Activated CD4-positive, alpha-beta T cell treated with anti-CD3 and anti-CD28 coated beads, Interleukin-2, amount 10 ng/mL, durations not matched to agents 7 days and 5 days (primary cell): ENCODE measurements at regions of chr1 and their contacts with region 1.

Region 1: GRCh38 chr1:59947047-59947938 is 20.7 kb upstream of the CYP2J2 start:
- DNase-seq: peak; percentile 63
- H3K4me3 Mint-ChIP-seq: no peak overlapping the region
- H3K27ac Mint-ChIP-seq: no peak overlapping the region
- H3K4me1 Mint-ChIP-seq: no peaks in the 10 kb centered on the region
- H3K27me3 Mint-ChIP-seq: peaks cover 17% of the 10 kb centered on the region

Region 2: DNA sequence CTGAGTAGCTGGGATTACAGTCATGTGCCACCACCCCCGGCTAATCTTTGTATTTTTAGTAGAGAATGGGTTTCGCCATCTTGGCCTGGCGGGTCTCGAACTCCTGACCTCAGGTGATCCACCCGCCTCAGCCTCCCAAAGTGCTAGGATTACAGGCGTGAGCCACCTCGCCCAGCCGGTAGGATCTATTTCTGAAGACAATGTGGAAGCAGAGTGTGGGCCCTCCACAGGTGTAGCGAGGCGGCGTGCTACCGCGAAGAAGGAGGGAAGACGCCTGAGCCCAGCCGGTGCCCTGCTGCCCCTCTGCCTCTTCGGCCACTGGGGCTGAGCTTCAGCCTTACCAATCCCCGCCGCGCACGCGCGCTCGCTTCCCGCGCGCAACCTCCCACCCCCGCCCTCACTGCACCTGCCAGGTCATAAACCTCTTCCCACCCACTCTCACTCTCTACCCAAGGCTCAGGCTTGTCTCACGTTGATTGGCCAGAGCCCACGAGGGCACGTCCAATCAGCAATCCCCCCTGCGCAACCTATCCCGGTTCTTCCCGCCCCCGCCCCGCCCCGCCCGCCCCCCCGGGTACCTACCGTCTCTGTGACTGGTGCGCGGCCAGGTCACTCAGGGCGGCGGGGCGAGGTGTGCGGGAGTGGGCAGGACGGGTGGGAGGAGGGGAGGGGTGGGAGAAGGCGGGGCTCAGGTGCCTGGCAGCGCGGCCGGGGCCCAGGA is 133.0 kb before region 1 on chr1:
- CTCF ChIA-PET with region 1: no interaction called
- POLR2A ChIA-PET with region 1: no interaction called
- DNase-seq: peak; percentile 90
- H3K4me3 Mint-ChIP-seq: no peak overlapping the region
- H3K27ac Mint-ChIP-seq: peak overlapping the region; percentile 85
- H3K4me1 Mint-ChIP-seq: peaks cover 9% of the 10 kb centered on the region
- H3K27me3 Mint-ChIP-seq: peaks cover 22% of the 10 kb centered on the region

Region 3: DNA sequence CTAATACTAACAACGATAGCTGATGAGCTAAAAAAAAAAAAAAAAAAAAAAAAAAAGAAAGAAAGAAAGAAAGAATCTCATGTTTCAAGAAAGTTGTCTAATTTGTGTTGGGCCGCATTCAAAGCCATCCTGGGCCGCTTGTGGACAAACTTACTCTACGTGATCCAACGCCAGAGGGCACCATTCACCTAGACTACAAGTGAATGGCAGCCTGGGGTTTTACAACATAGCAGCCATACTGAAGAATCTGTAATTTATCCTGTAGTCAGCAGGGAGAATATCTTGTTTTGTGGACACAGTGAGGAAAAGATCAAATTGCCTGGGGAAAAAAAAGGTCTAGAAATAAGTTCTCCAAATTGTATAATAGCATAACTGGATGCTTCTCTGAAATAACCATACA is 67.7 kb before region 1 on chr1:
- CTCF ChIA-PET with region 1: interaction called, 12 read pairs
- POLR2A ChIA-PET with region 1: no interaction called
- DNase-seq: peak; percentile 79
- H3K4me3 Mint-ChIP-seq: no peak overlapping the region
- H3K27ac Mint-ChIP-seq: no peak overlapping the region
- H3K4me1 Mint-ChIP-seq: peaks cover 1% of the 10 kb centered on the region
- H3K27me3 Mint-ChIP-seq: peaks cover 5% of the 10 kb centered on the region